GM10248 (cell line): ENCODE measurements at regions of chr18 and their contacts with region 1.

Region 1: DNA sequence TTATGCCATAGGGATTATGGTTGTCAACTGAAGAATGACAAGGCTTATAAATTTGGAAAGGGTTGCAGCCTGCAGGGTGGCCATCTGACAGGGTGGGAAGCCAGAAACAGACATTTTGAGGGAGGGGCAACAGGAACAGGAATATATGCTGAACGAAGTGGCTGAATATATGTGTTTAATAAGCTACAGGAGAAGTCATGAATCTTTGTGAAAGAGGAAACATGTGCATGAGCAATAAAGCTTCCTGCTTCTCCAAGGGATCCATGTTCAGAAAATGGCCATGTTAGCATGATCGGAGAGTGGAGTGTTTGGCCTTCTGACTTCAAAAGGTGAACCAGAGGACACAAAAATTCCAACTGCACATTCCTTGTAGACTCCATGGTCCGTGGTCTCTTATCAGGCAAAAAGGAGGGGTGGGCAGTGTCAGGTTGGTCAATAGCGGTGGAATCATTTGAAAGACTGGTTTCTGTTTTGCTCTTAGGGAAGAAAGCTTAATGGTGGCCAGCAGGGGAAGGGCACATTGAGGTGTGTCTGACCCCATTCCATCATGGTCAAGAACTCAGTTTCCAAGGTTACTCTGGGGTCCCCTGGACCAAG is 144.1 kb downstream of the SOCS6 start:
- DNase-seq: no peak
- CTCF ChIP-seq: no peak

Region 2: GRCh38 chr18:69947361-69948133 is 485.4 kb before region 1 on chr18 and contains the start of gene CD226:
- CTCF ChIA-PET with region 1: no interaction called
- POLR2A ChIA-PET with region 1: interaction called, 10 read pairs
- DNase-seq: no peak
- CTCF ChIP-seq: no peak

Region 3: DNA sequence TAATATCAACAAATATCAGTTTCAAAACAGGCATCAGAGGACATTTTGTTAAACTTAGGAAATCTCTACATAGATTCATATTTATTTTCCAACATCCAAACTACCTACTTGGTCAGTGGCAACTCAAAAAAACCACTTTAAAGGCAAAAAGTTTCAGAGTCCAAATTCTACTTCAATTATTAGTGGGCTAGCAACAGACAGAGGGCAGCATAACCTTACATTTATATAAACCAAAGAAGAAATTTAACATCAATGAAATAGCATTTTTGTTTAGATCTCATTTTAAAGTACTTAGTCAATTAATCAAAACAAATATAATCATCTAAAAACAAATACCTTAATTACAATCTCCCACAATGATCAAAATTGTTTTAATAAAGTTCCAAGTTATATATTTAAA is 260.7 kb before region 1 on chr18:
- CTCF ChIA-PET with region 1: interaction called, 36 read pairs
- POLR2A ChIA-PET with region 1: no interaction called
- DNase-seq: no peak
- CTCF ChIP-seq: peak; percentile 43

Region 4: DNA sequence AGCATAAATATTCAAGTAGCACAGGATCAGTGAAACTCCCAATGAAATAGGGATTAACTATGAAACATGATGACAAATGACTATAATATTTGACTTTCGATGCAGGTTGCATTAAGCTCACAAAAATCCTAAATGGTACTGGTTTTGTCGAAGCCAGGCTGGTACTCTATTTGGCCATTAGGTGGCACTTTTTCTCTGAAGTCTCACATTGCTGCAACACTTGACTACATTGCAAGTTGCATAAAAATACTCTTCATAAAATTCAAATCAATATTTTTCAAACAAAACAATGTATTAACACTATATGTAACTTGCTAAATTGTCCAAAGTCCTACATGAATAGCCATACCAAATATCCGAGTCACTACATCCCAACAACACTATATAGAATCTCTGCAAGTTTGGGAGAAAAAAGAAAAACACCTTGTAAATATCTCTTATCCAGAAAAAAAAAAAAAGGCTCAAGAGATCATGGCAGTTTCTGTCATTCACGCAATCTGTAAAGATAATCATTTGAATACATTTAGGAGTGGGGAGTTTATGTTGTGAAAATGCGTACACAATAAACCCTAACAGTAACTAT is 237.0 kb before region 1 on chr18:
- CTCF ChIA-PET with region 1: interaction called, 73 read pairs
- POLR2A ChIA-PET with region 1: no interaction called
- DNase-seq: peak; percentile 21
- CTCF ChIP-seq: peak; percentile 45

Region 5: GRCh38 chr18:70421471-70422390 is 11.2 kb before region 1 on chr18:
- CTCF ChIA-PET with region 1: interaction called, 22 read pairs
- POLR2A ChIA-PET with region 1: no interaction called
- DNase-seq: no peak
- CTCF ChIP-seq: no peak

Region 6: DNA sequence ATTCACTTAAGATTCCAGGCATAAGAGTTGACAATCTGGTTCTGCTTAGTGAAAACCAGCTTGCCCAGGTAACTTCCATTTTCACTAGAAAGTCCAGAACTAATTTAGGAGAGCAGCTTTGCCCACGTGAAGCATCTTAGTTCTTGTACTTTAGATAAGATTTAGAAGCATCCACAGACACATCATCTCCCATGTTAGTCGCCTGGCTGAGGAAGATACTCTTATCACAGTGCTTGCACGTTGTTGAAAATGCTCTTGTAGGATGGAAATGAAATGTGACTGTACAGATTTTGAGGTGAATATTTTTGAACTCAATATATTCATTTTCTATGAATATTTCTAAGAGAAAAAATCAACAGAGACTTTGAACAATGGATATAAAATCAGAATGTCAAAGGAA is 15.7 kb after region 1 on chr18:
- CTCF ChIA-PET with region 1: interaction called, 30 read pairs
- POLR2A ChIA-PET with region 1: no interaction called
- DNase-seq: no peak
- CTCF ChIP-seq: no peak

Region 7: GRCh38 chr18:70454704-70455322 is 21.9 kb after region 1 on chr18:
- CTCF ChIA-PET with region 1: interaction called, 30 read pairs
- POLR2A ChIA-PET with region 1: no interaction called
- DNase-seq: peak; percentile 54
- CTCF ChIP-seq: peak; percentile 67

Region 8: DNA sequence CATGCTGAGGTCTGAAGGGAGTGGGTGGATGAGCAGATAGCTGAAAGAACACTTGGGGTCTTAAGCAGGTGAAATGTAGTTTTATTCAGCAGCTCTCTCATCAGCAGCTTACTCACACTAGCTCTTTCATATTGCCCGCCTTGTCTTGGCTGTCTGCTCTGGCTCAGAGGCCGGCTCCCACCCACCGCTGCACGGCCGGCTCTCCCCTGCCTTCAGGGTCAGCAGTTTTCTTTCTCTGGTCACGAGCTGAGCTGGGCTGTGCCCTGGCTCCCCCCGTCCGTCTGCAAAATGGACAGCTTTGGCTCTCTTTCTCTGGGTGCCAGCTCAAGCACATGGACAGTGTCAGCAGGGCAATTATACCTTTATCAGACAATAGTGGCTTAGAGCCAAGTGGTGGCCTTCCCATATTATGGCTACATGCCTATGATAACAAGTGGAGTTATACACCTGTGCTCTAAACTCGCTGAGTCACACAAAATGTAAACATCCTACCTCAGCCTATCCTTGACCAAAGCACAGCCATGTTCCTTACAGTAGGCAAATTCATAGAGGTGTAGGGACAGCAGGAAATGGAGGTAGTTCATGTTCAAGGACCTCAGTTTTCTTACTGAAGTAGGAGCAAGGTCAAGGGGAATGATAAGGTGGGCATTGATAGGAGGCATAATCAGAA is 80.7 kb after region 1 on chr18:
- CTCF ChIA-PET with region 1: no interaction called
- POLR2A ChIA-PET with region 1: no interaction called
- DNase-seq: no peak
- CTCF ChIP-seq: no peak

Region 9: DNA sequence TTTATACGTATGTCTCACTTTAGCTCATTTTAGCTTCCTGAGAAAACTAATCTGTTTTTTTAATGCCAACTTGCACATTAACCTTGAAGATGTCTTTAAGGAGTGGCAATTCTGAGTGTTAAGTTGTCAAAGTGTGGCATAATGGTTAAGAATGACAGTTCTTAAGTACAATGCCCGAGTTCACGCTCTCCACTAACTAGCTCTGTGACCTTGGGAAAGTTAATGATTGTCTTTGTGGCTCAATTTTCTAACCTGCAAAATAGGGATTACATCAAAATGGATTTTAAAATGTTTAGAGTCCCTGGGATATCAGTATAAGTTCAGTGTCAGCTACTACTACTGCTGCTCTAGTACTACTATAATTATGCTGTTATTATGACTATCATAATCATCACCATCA is 265.7 kb after region 1 on chr18:
- CTCF ChIA-PET with region 1: no interaction called
- POLR2A ChIA-PET with region 1: no interaction called
- DNase-seq: no peak
- CTCF ChIP-seq: no peak